AG04450 (cell line): ENCODE measurements at regions of chr6 and their contacts with region 1.

Region 1: DNA sequence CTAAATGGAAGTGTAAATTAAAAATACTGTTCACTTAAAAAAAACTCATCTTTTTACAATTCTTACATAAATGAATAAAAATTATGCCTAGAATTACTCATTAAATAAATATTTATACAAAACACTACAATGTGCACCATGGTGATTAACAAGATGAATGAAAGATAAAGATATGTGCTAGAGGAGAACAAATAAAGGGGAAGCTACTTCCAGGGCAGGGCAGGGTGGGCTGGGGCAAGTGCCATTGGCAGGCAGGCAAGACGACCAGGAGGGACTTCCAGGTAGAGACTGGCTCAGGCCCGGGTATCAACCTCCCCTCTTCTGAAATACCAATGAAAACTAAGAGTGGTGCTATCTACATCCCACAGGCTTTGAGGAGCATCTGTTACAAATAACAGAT is 20.4 kb downstream of the PREP start:
- DNase-seq: no peak
- H3K4me3 ChIP-seq: no peak overlapping the region
- H3K27ac ChIP-seq: no peak overlapping the region
- H3K27me3 ChIP-seq: no peaks in the 10 kb centered on the region
- CTCF ChIP-seq: no peak

Region 2: DNA sequence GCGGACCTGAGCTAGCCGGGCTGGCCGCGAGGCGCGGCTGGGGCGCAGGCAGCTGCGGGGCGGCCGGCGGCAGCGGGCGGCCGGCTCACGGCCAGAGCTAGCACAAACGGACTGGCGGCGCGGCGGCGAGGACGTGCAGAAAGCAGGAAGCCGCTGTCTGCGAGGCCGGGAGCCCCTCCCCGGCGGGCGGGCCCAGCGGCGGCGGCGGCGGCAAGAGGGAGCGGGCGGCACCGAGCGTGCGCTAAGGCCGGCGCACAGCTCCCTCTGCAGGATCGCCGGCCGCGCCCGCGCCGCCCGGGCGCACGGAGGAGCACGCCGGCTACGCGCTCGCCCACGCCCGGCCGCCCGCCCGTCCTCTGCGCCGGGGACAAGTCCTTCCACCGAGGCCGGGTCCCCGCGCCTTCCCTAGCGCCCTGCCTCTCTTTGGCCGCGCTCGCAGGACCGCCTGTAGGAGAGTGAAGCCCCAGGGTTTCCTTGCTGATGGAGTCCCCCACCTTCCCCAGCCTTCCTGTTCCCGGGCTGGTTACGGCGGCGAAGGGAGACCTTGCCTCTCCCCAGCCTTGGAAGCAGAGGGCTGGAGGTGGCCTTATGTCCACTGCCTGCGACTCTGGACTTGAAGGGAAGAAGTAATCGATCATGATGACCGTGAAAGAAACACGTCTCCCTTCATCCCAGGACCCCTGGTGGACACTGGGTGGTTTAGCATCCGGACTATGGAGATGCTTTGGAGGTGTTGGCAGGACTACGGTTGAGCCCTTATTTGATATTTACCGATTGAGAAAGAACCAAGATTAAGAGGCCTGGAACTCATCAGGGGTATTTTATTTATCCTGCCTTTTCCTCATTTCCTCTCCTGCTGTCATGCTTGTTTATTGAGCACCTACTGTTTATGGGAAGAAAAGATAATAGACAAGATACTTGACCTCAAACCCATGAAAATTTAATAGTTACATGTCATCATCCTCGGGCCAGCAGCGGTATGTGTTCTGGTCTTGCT is 20.7 kb after region 1 on chr6 and contains the start of gene PREP:
- CTCF ChIA-PET with region 1: interaction called, 10 read pairs
- POLR2A ChIA-PET with region 1: interaction called, 3 read pairs
- DNase-seq: peak; percentile 44
- H3K4me3 ChIP-seq: peak within 1 kb of the TSS; percentile 95
- H3K27ac ChIP-seq: peak within 1 kb of the TSS; percentile 80
- H3K27me3 ChIP-seq: no peaks in the 10 kb centered on the region
- CTCF ChIP-seq: peak; percentile 92
- polyA plus RNA-seq, gene PREP: 16.4 and 21.2 TPM in 2 replicates

Region 3: DNA sequence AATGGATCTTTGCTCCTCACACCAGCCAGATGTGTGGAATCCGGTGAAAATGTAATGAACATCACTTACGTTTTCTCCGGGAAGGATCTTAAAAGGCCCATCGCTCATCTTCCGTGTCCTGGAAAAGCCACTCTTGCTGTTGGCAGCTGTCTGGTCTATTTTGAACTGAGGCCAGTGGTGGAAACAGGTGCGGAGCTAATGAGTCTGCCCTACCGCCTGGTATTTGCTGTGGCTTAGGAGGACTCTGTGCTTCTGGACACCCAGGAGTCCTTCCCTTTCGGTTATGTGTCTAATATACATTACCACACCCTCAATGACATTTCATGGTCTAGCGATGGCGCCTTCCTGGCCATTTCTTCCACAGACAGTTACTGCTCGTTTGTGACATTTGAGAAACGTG is 284.6 kb after region 1 on chr6:
- CTCF ChIA-PET with region 1: no interaction called
- POLR2A ChIA-PET with region 1: no interaction called
- DNase-seq: no peak
- H3K4me3 ChIP-seq: no peak overlapping the region
- H3K27ac ChIP-seq: no peak overlapping the region
- H3K27me3 ChIP-seq: no peaks in the 10 kb centered on the region
- CTCF ChIP-seq: no peak